K562 (cell line): ENCODE measurements at regions of chr10 and their contacts with region 1.

Region 1: GRCh38 chr10:60021324-60021723 is 115.0 kb upstream of the CCDC6 start:
- DNase-seq: no peak
- ATAC-seq: no peak
- H3K4me3 ChIP-seq: no peak overlapping the region
- H3K27ac ChIP-seq: no peak overlapping the region
- H3K4me1 ChIP-seq: no peaks in the 10 kb centered on the region
- H3K27me3 ChIP-seq: peaks cover 3 to 8% of the 10 kb centered on the region in 2 experiments; a peak in 3 of 5 replicates
- CTCF ChIP-seq: no peak
- EP300 ChIP-seq: no peak
- POLR2A ChIP-seq: no peak
- RAD21 ChIP-seq: no peak

Region 2: GRCh38 chr10:59595593-59595992 is 425.7 kb before region 1 on chr10:
- CTCF ChIA-PET with region 1: no interaction called
- POLR2A ChIA-PET with region 1: no interaction called
- in situ Hi-C with region 1: no loop called
- intact Hi-C with region 1: no loop called
- DNase-seq: no peak
- ATAC-seq: no peak
- H3K4me3 ChIP-seq: no peak overlapping the region
- H3K27ac ChIP-seq: no peak overlapping the region
- H3K4me1 ChIP-seq: no peaks in the 10 kb centered on the region
- H3K27me3 ChIP-seq: no peaks in the 10 kb centered on the region
- CTCF ChIP-seq: no peak
- EP300 ChIP-seq: no peak
- POLR2A ChIP-seq: no peak
- RAD21 ChIP-seq: no peak

Region 3: DNA sequence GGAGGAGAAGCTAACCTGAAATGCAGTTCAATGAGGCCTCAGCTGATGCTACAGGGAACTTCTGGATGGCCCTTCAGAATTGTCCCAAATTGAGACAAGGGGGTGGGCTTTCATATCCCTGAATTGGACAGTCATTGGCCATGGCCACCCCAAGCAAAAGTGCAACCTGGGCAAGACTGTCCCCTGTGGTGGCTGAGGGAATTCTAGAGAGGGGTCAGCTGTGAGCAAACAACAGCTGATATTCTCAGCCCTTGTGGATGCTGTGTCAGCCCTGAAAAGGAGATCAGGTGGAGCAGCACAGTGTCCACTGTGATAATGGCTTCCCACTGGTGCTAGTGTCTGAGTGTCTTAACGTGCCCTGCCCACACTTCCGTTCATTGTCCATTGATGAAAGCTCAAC is 388.3 kb before region 1 on chr10:
- CTCF ChIA-PET with region 1: no interaction called
- POLR2A ChIA-PET with region 1: interaction called, 3 read pairs
- in situ Hi-C with region 1: loop called (anchors 5 kb)
- intact Hi-C with region 1: no loop called
- DNase-seq: peak in 2 of 4 experiments; percentile 16 to 18
- ATAC-seq: peak; percentile 89
- H3K4me3 ChIP-seq: no peak overlapping the region
- H3K27ac ChIP-seq: no peak overlapping the region
- H3K4me1 ChIP-seq: no peaks in the 10 kb centered on the region
- H3K27me3 ChIP-seq: no peaks in the 10 kb centered on the region; a peak in 2 of 5 replicates
- CTCF ChIP-seq: peak; percentile 25 to 45 (median 36)
- EP300 ChIP-seq: no peak
- POLR2A ChIP-seq: no peak
- RAD21 ChIP-seq: 0 out of 4 replicates have a peak, but pooled peaks of 1 of the 2 experiments have one; percentile 6

Region 4: GRCh38 chr10:60148264-60148840 is 127.0 kb after region 1 on chr10:
- CTCF ChIA-PET with region 1: no interaction called
- POLR2A ChIA-PET with region 1: no interaction called
- in situ Hi-C with region 1: no loop called
- intact Hi-C with region 1: no loop called
- DNase-seq: peak in 1 of 4 experiments; percentile 58
- ATAC-seq: peak; percentile 64
- H3K4me3 ChIP-seq: no peak overlapping the region
- H3K27ac ChIP-seq: no peak overlapping the region
- H3K4me1 ChIP-seq: peaks cover 2 to 7% of the 10 kb centered on the region in 2 experiments; a peak in 3 of 5 replicates
- H3K27me3 ChIP-seq: no peaks in the 10 kb centered on the region
- CTCF ChIP-seq: no peak
- EP300 ChIP-seq: no peak
- POLR2A ChIP-seq: no peak
- RAD21 ChIP-seq: no peak